Right cardiac atrium (tissue), 5 donors: ENCODE measurements at regions of chr1 and their contacts with region 1.

Region 1: DNA sequence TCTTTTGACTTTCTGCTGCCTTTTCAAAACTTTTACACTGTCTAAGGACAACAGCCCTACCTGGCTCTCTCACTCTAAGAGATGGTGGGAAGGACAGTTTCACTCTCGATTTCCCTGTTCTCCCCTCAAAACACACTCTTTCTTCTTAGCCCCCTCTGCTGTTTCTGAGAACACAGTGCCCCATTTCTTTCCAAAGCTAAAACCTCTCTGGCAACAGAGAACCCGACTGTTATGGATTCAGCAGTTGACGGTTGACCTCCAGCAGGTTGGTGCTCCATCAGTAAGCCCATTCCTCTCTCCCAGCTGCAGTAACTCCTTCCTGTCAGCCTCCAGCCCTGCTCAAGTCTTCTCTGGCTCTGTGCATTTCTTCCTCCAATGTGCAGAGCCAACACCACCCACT is 88.2 kb upstream of the ABCD3 start:
- DNase-seq: no peak
- ATAC-seq: peak; percentile 37 to 40
- H3K4me3 ChIP-seq: no peak overlapping the region
- H3K27ac ChIP-seq: peak overlapping the region; percentile 32
- H3K4me1 ChIP-seq: peaks cover 2% of the 10 kb centered on the region
- H3K27me3 ChIP-seq: no peaks in the 10 kb centered on the region

Region 2: GRCh38 chr1:94247138-94248094 is 82.6 kb before region 1 on chr1:
- intact Hi-C with region 1: loop called (anchors 5 to 10 kb)
- DNase-seq: peak; percentile 84 to 93 (median 93)
- ATAC-seq: peak; percentile 94 to 96
- H3K4me3 ChIP-seq: peak overlapping the region; percentile 73
- H3K27ac ChIP-seq: peak overlapping the region; percentile 87
- H3K4me1 ChIP-seq: no peaks in the 10 kb centered on the region
- H3K27me3 ChIP-seq: no peaks in the 10 kb centered on the region